CD8-positive, alpha-beta T cell (primary cell): ENCODE measurements at regions of chrX and their contacts with region 1.

Region 1: GRCh38 chrX:24253469-24253868 is 60.4 kb downstream of the SUPT20HL2 start:
- DNase-seq: no peak
- ATAC-seq: no peak
- H3K4me3 ChIP-seq: no peak overlapping the region
- H3K4me3 Mint-ChIP-seq: no peak overlapping the region
- H3K27ac ChIP-seq: no peak overlapping the region
- H3K27ac Mint-ChIP-seq: no peak overlapping the region
- H3K4me1 ChIP-seq: no peaks in the 10 kb centered on the region
- H3K4me1 Mint-ChIP-seq: no peaks in the 10 kb centered on the region
- H3K27me3 ChIP-seq: no peaks in the 10 kb centered on the region
- H3K27me3 Mint-ChIP-seq: peaks cover 6% of the 10 kb centered on the region
- CTCF ChIP-seq: no peak

Region 2: GRCh38 chrX:24153134-24153795 is 100.2 kb before region 1 on chrX:
- CTCF ChIA-PET with region 1: no interaction called
- POLR2A ChIA-PET with region 1: no interaction called
- intact Hi-C with region 1: no loop called
- DNase-seq: peak in 6 of 9 experiments; percentile 3 to 48 (median 26)
- ATAC-seq: no peak
- H3K4me3 ChIP-seq: no peak overlapping the region
- H3K4me3 Mint-ChIP-seq: peak overlapping the region; percentile 79
- H3K27ac ChIP-seq: peak overlapping the region in 1 of 2 experiments; percentile 39
- H3K27ac Mint-ChIP-seq: peak overlapping the region; percentile 84
- H3K4me1 ChIP-seq: peaks cover 38% of the 10 kb centered on the region
- H3K4me1 Mint-ChIP-seq: peaks cover 64% of the 10 kb centered on the region
- H3K27me3 ChIP-seq: no peaks in the 10 kb centered on the region
- H3K27me3 Mint-ChIP-seq: no peaks in the 10 kb centered on the region
- CTCF ChIP-seq: no peak

Region 3: DNA sequence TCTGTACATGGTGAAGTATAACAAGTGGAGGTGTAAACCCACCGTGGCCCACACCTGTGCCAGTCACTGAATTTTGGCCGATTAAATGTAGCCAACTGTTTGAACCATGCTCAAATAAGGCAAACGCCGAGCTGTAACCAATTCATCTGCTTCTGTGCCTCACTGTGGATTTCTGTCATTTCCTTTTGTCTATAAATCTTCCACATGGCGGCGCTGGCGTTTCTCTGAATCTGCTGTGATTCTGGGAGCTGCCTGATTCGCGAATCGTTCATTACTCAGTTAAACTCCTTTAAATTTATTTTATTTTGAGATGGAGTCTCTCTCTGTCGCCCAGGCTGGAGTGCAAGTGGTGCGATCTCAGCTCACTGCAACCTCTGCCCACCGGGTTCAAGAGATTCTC is 41.2 kb after region 1 on chrX:
- CTCF ChIA-PET with region 1: no interaction called
- POLR2A ChIA-PET with region 1: no interaction called
- intact Hi-C with region 1: loop called in 1 of 2 experiments (anchors 2 kb)
- DNase-seq: no peak
- ATAC-seq: no peak
- H3K4me3 ChIP-seq: no peak overlapping the region
- H3K4me3 Mint-ChIP-seq: no peak overlapping the region
- H3K27ac ChIP-seq: no peak overlapping the region
- H3K27ac Mint-ChIP-seq: no peak overlapping the region
- H3K4me1 ChIP-seq: no peaks in the 10 kb centered on the region
- H3K4me1 Mint-ChIP-seq: no peaks in the 10 kb centered on the region
- H3K27me3 ChIP-seq: no peaks in the 10 kb centered on the region
- H3K27me3 Mint-ChIP-seq: peaks cover 3% of the 10 kb centered on the region
- CTCF ChIP-seq: no peak